ENCODE measurements at regions of chr4 and their contacts with region 1.

Region 1: DNA sequence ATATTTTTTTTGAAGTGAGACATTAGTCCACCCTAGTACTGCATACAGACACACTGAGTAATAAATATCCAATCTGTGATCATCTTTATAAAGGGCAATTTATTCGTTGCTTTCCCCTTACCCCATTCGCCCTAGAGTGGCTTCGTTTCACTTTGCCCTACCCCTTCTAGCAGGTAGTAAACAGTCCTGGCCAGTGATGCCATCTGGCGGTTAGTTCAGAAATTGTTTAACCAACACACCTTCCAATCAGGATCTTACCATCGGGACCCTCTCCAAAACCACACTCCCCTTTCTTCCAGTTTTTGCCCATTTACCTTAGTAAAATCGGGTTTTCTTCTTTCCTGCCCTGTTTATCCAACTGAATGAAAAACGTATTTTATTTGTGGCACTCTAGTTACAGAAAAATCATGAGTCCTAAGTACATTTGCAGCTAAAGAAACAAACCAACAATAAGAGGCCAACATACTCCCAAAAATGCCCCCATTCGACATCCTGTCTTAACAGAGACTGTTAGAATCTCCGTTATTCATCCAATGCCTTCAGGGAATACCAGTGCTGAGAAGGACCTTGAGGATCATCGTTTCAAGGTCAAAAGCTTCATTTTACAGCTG is 2.2 kb downstream of the PPA2 start:
- DNase-seq: peak; percentile 48
- H3K4me3 ChIP-seq: peak overlapping the region; percentile 81
- H3K27ac ChIP-seq: no peak overlapping the region
- H3K27me3 ChIP-seq: no peaks in the 10 kb centered on the region
- CTCF ChIP-seq: peak; percentile 85

Region 2: DNA sequence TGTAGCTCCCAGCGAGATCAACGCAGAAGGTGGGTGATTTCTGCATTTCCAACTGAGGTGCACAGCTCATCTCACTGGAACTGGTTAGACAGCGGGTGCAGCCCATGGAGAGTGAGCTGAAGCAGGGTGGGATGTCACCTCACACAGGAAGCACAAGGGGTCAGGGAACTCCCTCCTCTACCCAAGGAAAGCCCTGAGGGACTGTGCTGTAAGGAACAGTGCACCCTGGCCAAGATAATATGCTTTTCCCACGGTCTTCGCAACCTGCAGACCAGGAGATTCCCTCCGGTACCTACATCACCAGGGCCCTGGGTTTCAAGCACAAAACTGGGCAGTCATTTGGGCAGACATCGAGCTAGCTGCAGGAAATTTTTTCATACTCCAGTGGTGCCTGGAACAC is 541.4 kb before region 1 on chr4:
- CTCF ChIA-PET with region 1: interaction called, 14 read pairs
- POLR2A ChIA-PET with region 1: interaction called, 5 read pairs
- DNase-seq: no peak
- H3K4me3 ChIP-seq: no peak overlapping the region
- H3K27ac ChIP-seq: no peak overlapping the region
- H3K27me3 ChIP-seq: no peaks in the 10 kb centered on the region
- CTCF ChIP-seq: no peak

Region 3: GRCh38 chr4:105140684-105141490 is 330.8 kb before region 1 on chr4:
- CTCF ChIA-PET with region 1: interaction called, 38 read pairs
- POLR2A ChIA-PET with region 1: no interaction called
- DNase-seq: no peak
- H3K4me3 ChIP-seq: no peak overlapping the region
- H3K27ac ChIP-seq: no peak overlapping the region
- H3K27me3 ChIP-seq: no peaks in the 10 kb centered on the region
- CTCF ChIP-seq: peak; percentile 71

Region 4: DNA sequence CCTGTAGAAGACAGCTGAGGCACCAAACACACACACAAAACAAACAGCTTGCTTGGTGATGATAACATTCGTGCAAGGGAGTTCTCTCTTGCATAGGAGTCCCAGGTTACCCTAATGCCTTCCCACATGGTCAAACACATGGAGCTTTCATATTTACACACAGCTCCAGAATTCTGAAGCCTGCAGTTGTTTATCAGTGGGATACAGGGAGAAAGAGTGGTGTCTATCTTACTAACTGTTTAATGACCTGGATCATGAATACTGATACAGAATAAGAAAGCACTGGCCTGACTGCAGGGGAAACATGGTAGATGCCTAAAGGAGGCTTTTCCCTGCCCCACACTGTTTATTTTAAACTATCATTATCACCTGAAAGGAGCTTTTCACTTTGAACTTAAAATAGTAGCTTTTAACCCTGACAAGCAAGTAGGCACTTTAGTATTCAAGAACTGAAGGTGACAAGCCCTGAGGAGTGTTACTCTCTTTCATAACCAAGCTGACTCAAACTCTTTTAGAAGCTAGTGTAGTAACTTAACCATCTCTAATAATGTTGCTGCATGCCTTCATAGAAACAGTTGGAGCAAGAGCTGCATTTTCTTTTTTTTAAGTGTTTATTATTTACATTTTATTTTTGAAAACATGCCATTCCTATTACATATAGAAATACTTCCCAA is 309.4 kb before region 1 on chr4:
- CTCF ChIA-PET with region 1: interaction called, 10 read pairs
- POLR2A ChIA-PET with region 1: no interaction called
- DNase-seq: no peak
- H3K4me3 ChIP-seq: no peak overlapping the region
- H3K27ac ChIP-seq: no peak overlapping the region
- H3K27me3 ChIP-seq: no peaks in the 10 kb centered on the region
- CTCF ChIP-seq: no peak

Region 5: DNA sequence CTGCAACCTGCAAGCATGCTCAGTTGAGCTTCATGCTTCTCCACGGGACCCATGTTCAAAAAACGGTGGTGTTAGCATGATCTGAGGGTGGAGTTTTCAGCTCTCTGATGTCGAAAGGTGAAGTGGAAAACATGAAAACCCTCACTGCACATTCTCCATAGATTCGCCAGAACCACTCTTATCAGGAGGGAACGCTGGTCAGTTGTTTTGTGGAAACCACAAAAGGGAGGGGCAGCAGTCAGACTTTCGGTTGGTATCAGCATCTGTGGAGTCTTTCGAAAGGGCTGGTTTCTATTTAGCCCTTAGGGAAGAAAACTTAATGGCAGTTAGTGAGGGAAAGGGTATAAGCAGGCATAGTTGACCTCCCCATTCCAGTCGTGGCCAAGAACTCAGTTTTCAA is 10.4 kb before region 1 on chr4:
- CTCF ChIA-PET with region 1: interaction called, 16 read pairs
- POLR2A ChIA-PET with region 1: interaction called, 3 read pairs
- DNase-seq: no peak
- H3K4me3 ChIP-seq: no peak overlapping the region
- H3K27ac ChIP-seq: no peak overlapping the region
- H3K27me3 ChIP-seq: no peaks in the 10 kb centered on the region
- CTCF ChIP-seq: no peak

Region 6: GRCh38 chr4:105715692-105716278 is 244.1 kb after region 1 on chr4:
- CTCF ChIA-PET with region 1: interaction called, 11 read pairs
- POLR2A ChIA-PET with region 1: no interaction called
- DNase-seq: no peak
- H3K4me3 ChIP-seq: no peak overlapping the region
- H3K27ac ChIP-seq: no peak overlapping the region
- H3K27me3 ChIP-seq: no peaks in the 10 kb centered on the region
- CTCF ChIP-seq: peak; percentile 47